Endothelial cell of umbilical vein (primary cell): ENCODE measurements at regions of chr14 and their contacts with region 1.

Region 1: DNA sequence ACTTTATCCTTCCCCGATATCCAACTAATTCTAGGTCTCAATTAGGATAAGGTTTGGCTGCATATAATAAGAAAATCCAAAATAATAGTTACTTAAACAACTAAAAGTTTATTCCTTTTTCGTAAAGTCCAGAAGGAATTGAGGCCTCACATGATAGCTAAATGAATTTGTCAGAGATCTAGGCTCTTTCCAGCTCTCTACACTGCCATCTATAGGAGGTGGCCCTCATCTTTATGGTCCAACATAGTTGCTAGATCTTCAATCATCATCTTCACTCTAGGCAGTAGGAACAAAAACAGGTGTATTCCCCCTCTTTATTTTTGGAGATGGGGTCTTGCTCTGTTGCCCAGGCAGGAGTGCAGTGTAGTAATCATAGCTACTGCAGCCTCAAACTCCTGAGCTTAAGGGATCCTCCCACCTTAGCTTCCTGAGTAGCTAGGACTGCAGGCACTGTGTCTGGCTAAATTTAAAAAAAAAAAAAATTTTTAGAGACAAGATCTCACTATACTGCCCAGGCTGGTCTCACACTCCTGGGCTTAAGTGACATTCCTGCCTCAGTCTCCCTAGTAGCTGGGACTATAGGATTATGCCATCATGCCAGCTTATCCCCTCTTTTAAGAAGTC is 46.5 kb upstream of the SAV1 start:
- DNase-seq: peak; percentile 60
- H3K4me3 ChIP-seq: no peak overlapping the region
- H3K27ac ChIP-seq: no peak overlapping the region
- H3K4me1 ChIP-seq: no peaks in the 10 kb centered on the region
- H3K27me3 ChIP-seq: no peaks in the 10 kb centered on the region
- CTCF ChIP-seq: peak; percentile 38 to 63
- POLR2A ChIP-seq: no peak

Region 2: GRCh38 chr14:50559990-50560930 is 154.3 kb before region 1 on chr14 and contains the start of gene ATL1:
- CTCF ChIA-PET with region 1: interaction called, 14 read pairs
- POLR2A ChIA-PET with region 1: interaction called, 11 read pairs
- dilution Hi-C with region 1: loop called (anchors 25 kb)
- intact Hi-C with region 1: no loop called
- DNase-seq: peak; percentile 59
- H3K4me3 ChIP-seq: peak within 1 kb of the TSS; percentile 59 to 92 (median 90)
- H3K27ac ChIP-seq: no peak within 1 kb of the TSS
- H3K4me1 ChIP-seq: peaks cover 11% of the 10 kb centered on the region
- H3K27me3 ChIP-seq: peaks cover 23% of the 10 kb centered on the region in 2 experiments
- CTCF ChIP-seq: no peak
- POLR2A ChIP-seq: no peak
- total RNA-seq, gene ATL1: 2.8 and 5.1 TPM in 2 replicates

Region 3: GRCh38 chr14:50619556-50620141 is 94.9 kb before region 1 on chr14:
- CTCF ChIA-PET with region 1: interaction called, 62 read pairs
- POLR2A ChIA-PET with region 1: no interaction called
- dilution Hi-C with region 1: no loop called
- intact Hi-C with region 1: loop called (anchors 1 kb)
- DNase-seq: peak; percentile 70
- H3K4me3 ChIP-seq: no peak overlapping the region
- H3K27ac ChIP-seq: no peak overlapping the region
- H3K4me1 ChIP-seq: peaks cover 5% of the 10 kb centered on the region
- H3K27me3 ChIP-seq: no peaks in the 10 kb centered on the region
- CTCF ChIP-seq: peak; percentile 37 to 42
- POLR2A ChIP-seq: no peak

Region 4: DNA sequence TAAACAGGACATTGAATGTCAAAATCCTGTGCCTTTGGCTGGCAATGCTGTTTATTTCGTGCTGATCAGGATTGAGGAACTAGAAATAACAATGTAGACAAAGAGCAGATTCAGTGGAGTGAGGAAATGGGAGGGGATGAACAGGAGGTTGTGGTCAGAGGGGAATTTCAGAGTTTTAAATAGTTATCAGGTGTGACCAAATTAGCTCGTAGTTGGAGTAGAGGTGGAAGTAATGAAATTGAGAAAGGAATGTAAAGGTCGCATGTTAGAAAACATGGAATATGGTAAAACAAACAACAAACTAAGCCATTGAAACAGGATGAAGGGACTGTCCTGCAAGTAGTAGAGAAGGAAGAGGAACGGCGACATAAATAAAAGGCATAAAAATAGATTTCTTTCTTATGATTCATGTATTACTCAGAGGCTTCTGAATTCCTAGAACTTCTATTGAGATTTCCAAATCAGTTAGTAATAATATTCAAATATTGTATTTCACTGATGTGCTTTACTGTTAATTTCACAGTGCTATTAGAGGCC is 37.0 kb before region 1 on chr14:
- CTCF ChIA-PET with region 1: interaction called, 15 read pairs
- POLR2A ChIA-PET with region 1: no interaction called
- dilution Hi-C with region 1: no loop called
- intact Hi-C with region 1: no loop called
- DNase-seq: peak; percentile 74
- H3K4me3 ChIP-seq: peak overlapping the region in 1 of 3 experiments; percentile 1
- H3K27ac ChIP-seq: peak overlapping the region; percentile 69
- H3K4me1 ChIP-seq: peaks cover 24% of the 10 kb centered on the region
- H3K27me3 ChIP-seq: no peaks in the 10 kb centered on the region
- CTCF ChIP-seq: no peak
- POLR2A ChIP-seq: no peak

Region 5: GRCh38 chr14:50704454-50705010 is 10.0 kb before region 1 on chr14:
- CTCF ChIA-PET with region 1: interaction called, 13 read pairs
- POLR2A ChIA-PET with region 1: no interaction called
- dilution Hi-C with region 1: no loop called
- intact Hi-C with region 1: no loop called
- DNase-seq: no peak
- H3K4me3 ChIP-seq: no peak overlapping the region
- H3K27ac ChIP-seq: no peak overlapping the region
- H3K4me1 ChIP-seq: no peaks in the 10 kb centered on the region
- H3K27me3 ChIP-seq: peaks cover 2 to 7% of the 10 kb centered on the region in 2 experiments
- CTCF ChIP-seq: no peak
- POLR2A ChIP-seq: no peak

Region 6: DNA sequence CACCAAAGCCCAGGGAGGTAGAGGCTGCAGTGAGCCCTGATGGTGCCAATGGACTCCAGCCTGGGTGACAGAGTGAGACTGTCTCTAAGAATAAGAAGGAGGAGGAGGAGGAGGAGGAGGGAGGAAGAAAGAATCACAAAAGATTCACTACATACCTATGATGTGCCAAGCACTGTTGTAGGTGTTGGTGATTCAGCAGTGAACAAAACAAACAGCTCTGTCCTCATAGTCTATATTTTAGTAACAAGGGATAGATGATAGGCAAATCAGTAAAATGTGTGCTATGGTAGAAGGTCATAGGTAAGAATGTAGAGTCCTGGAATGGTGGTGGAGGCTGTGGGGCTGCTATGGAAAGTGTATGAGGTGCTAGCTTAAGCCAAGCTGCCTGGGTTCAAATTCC is 139.3 kb after region 1 on chr14:
- CTCF ChIA-PET with region 1: no interaction called
- POLR2A ChIA-PET with region 1: no interaction called
- dilution Hi-C with region 1: no loop called
- intact Hi-C with region 1: no loop called
- DNase-seq: no peak
- H3K4me3 ChIP-seq: no peak overlapping the region
- H3K27ac ChIP-seq: no peak overlapping the region
- H3K4me1 ChIP-seq: no peaks in the 10 kb centered on the region
- H3K27me3 ChIP-seq: peaks cover 0 to 1% of the 10 kb centered on the region in 2 experiments
- CTCF ChIP-seq: no peak
- POLR2A ChIP-seq: no peak